CD4-positive, alpha-beta T cell (primary cell): ENCODE measurements at regions of chr13 and their contacts with region 1.

Region 1: GRCh38 chr13:59391696-59392095 is 772.0 kb downstream of the DIAPH3 start:
- DNase-seq: peak in 13 of 14 experiments; percentile 3 to 87 (median 38)
- ATAC-seq: peak; percentile 93
- H3K4me3 ChIP-seq: no peak overlapping the region
- H3K4me3 Mint-ChIP-seq: no peak overlapping the region
- H3K27ac ChIP-seq: peak overlapping the region in 1 of 2 donors; percentile 32
- H3K27ac Mint-ChIP-seq: no peak overlapping the region
- H3K4me1 ChIP-seq: peaks cover 13% of the 10 kb centered on the region
- H3K4me1 Mint-ChIP-seq: no peaks in the 10 kb centered on the region
- H3K27me3 ChIP-seq: peaks cover 0 to 1% of the 10 kb centered on the region in 2 experiments
- H3K27me3 Mint-ChIP-seq: peaks cover 9% of the 10 kb centered on the region
- CTCF ChIP-seq: peak; percentile 65

Region 2: DNA sequence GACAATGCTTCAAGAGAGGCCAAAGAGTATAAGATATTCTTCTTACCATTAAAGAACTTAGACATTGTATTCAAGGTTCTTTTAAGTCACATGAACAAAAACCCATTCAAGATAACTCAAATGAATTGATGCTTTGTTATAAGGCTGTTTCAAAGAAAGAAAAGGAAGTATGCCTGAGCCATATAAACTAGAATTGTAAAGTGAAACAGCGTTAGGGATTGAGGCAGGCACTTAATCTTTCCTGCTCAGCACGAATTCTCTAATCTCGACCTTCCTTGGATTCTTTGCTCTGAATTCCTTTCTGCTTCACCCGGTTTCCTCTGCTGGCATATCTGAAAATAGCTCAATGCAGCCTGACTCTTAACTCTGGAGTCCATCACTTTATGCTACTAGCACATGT is 176.6 kb after region 1 on chr13:
- CTCF ChIA-PET with region 1: no interaction called
- POLR2A ChIA-PET with region 1: no interaction called
- intact Hi-C with region 1: no loop called
- DNase-seq: no peak
- ATAC-seq: no peak
- H3K4me3 ChIP-seq: no peak overlapping the region
- H3K4me3 Mint-ChIP-seq: no peak overlapping the region
- H3K27ac ChIP-seq: no peak overlapping the region
- H3K27ac Mint-ChIP-seq: no peak overlapping the region
- H3K4me1 ChIP-seq: no peaks in the 10 kb centered on the region
- H3K4me1 Mint-ChIP-seq: no peaks in the 10 kb centered on the region
- H3K27me3 ChIP-seq: no peaks in the 10 kb centered on the region
- H3K27me3 Mint-ChIP-seq: peaks cover 9% of the 10 kb centered on the region
- CTCF ChIP-seq: no peak

Region 3: GRCh38 chr13:59677966-59678814 is 286.5 kb after region 1 on chr13:
- CTCF ChIA-PET with region 1: no interaction called
- POLR2A ChIA-PET with region 1: no interaction called
- intact Hi-C with region 1: loop called (anchors 2 to 5 kb)
- DNase-seq: peak in 3 of 14 experiments; percentile 49 to 58 (median 55)
- ATAC-seq: peak; percentile 55
- H3K4me3 ChIP-seq: no peak overlapping the region
- H3K4me3 Mint-ChIP-seq: no peak overlapping the region
- H3K27ac ChIP-seq: no peak overlapping the region
- H3K27ac Mint-ChIP-seq: no peak overlapping the region
- H3K4me1 ChIP-seq: no peaks in the 10 kb centered on the region
- H3K4me1 Mint-ChIP-seq: peaks cover 8% of the 10 kb centered on the region
- H3K27me3 ChIP-seq: no peaks in the 10 kb centered on the region
- H3K27me3 Mint-ChIP-seq: no peaks in the 10 kb centered on the region
- CTCF ChIP-seq: peak; percentile 34

Region 4: GRCh38 chr13:59890054-59890453 is 498.4 kb after region 1 on chr13:
- CTCF ChIA-PET with region 1: no interaction called
- POLR2A ChIA-PET with region 1: no interaction called
- intact Hi-C with region 1: loop called in 1 of 2 experiments (anchors 10 kb)
- DNase-seq: no peak
- ATAC-seq: no peak
- H3K4me3 ChIP-seq: no peak overlapping the region
- H3K4me3 Mint-ChIP-seq: no peak overlapping the region
- H3K27ac ChIP-seq: no peak overlapping the region
- H3K27ac Mint-ChIP-seq: no peak overlapping the region
- H3K4me1 ChIP-seq: no peaks in the 10 kb centered on the region
- H3K4me1 Mint-ChIP-seq: no peaks in the 10 kb centered on the region
- H3K27me3 ChIP-seq: no peaks in the 10 kb centered on the region
- H3K27me3 Mint-ChIP-seq: no peaks in the 10 kb centered on the region
- CTCF ChIP-seq: no peak

Region 5: GRCh38 chr13:60163478-60164233 is 772.0 kb after region 1 on chr13 and contains the start of gene DIAPH3:
- CTCF ChIA-PET with region 1: no interaction called
- POLR2A ChIA-PET with region 1: no interaction called
- intact Hi-C with region 1: loop called in 1 of 2 experiments (anchors 5 kb)
- DNase-seq: peak; percentile 85 to 94 (median 90)
- ATAC-seq: peak; percentile 97
- H3K4me3 ChIP-seq: peak within 1 kb of the TSS; percentile 71
- H3K4me3 Mint-ChIP-seq: peak within 1 kb of the TSS; percentile 88
- H3K27ac ChIP-seq: peak within 1 kb of the TSS; percentile 46 to 77
- H3K27ac Mint-ChIP-seq: peak within 1 kb of the TSS; percentile 89
- H3K4me1 ChIP-seq: peaks cover 13% of the 10 kb centered on the region
- H3K4me1 Mint-ChIP-seq: peaks cover 31% of the 10 kb centered on the region
- H3K27me3 ChIP-seq: no peaks in the 10 kb centered on the region
- H3K27me3 Mint-ChIP-seq: no peaks in the 10 kb centered on the region
- CTCF ChIP-seq: no peak
- total RNA-seq, gene DIAPH3: 0.08 to 0.11 TPM

Region 6: GRCh38 chr13:60335531-60335930 is 943.8 kb after region 1 on chr13:
- CTCF ChIA-PET with region 1: no interaction called
- POLR2A ChIA-PET with region 1: no interaction called
- intact Hi-C with region 1: loop called in 1 of 2 experiments (anchors 10 kb)
- DNase-seq: peak in 1 of 14 experiments; percentile 8
- ATAC-seq: no peak
- H3K4me3 ChIP-seq: no peak overlapping the region
- H3K4me3 Mint-ChIP-seq: no peak overlapping the region
- H3K27ac ChIP-seq: no peak overlapping the region
- H3K27ac Mint-ChIP-seq: no peak overlapping the region
- H3K4me1 ChIP-seq: no peaks in the 10 kb centered on the region
- H3K4me1 Mint-ChIP-seq: no peaks in the 10 kb centered on the region
- H3K27me3 ChIP-seq: peaks cover 0 to 10% of the 10 kb centered on the region in 2 experiments
- H3K27me3 Mint-ChIP-seq: peaks cover 11% of the 10 kb centered on the region
- CTCF ChIP-seq: peak; percentile 64

Region 7: GRCh38 chr13:60431108-60431700 is 1039.5 kb after region 1 on chr13:
- CTCF ChIA-PET with region 1: no interaction called
- POLR2A ChIA-PET with region 1: no interaction called
- intact Hi-C with region 1: loop called (anchors 1 to 5 kb)
- DNase-seq: peak in 3 of 14 experiments; percentile 71 to 76 (median 75)
- ATAC-seq: peak; percentile 89
- H3K4me3 ChIP-seq: no peak overlapping the region
- H3K4me3 Mint-ChIP-seq: no peak overlapping the region
- H3K27ac ChIP-seq: no peak overlapping the region
- H3K27ac Mint-ChIP-seq: no peak overlapping the region
- H3K4me1 ChIP-seq: peaks cover 6% of the 10 kb centered on the region
- H3K4me1 Mint-ChIP-seq: peaks cover 43% of the 10 kb centered on the region
- H3K27me3 ChIP-seq: no peaks in the 10 kb centered on the region
- H3K27me3 Mint-ChIP-seq: no peaks in the 10 kb centered on the region
- CTCF ChIP-seq: peak; percentile 96